ENCODE measurements at regions of chr3 and their contacts with region 1.

Region 1: DNA sequence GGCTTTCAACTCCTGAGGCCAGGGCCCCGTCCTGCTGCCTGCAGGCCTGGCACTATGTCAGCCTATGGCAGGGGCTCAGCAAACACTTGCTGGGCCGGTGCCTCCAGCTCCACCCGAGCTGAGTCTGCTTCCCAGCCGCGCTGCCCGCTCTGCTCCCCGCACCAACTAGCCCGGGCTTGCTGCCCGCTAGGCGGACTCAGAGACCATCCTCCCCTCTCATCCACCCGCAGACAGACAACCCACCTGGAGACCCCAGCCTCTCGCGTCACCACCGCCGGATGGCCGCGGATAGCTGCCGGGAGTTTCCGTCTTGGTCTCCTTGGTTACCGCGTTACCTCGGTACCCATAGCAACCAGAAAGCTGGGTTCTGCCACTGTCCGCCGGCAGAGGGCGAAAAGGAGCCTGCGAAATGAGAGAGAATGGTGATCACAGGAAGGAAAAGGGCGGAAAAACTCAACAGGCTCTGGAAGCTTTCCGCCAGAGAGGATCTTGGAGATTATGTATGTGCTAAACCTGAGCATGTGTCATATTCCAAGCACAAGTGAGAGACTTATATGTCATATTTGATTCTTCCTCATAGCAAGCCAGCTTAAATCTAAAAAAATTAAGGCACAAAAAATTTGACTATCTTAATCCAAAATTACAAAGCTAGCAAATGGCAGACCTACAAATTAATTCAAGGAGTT is at the start of gene ZBBX:
- DNase-seq: peak; percentile 92 to 99
- H3K4me3 ChIP-seq: peak within 1 kb of the TSS; percentile 40 to 58 (median 44)
- H3K27ac ChIP-seq: no peak within 1 kb of the TSS
- H3K4me1 ChIP-seq: no peaks in the 10 kb centered on the region
- H3K27me3 ChIP-seq: no peaks in the 10 kb centered on the region
- CTCF ChIP-seq: peak; percentile 71 to 95 (median 79)
- EP300 ChIP-seq: 0 out of 3 replicates have a peak, but pooled peaks of 1 of the 2 experiments have one; percentile 41
- POLR2A ChIP-seq: peak in 1 of 2 experiments; percentile 33; a peak in 1 of 3 replicates
- RAD21 ChIP-seq: peak; percentile 70 to 77
- total RNA-seq, gene ZBBX: 0.84 and 1.0 TPM in 2 replicates

Region 2: GRCh38 chr3:167102071-167102470 is 278.1 kb before region 1 on chr3:
- CTCF ChIA-PET with region 1: no interaction called
- POLR2A ChIA-PET with region 1: no interaction called
- DNase-seq: peak in 1 of 2 experiments; percentile 54
- H3K4me3 ChIP-seq: no peak overlapping the region
- H3K27ac ChIP-seq: no peak overlapping the region
- H3K4me1 ChIP-seq: no peaks in the 10 kb centered on the region
- H3K27me3 ChIP-seq: no peaks in the 10 kb centered on the region
- CTCF ChIP-seq: peak in 2 of 3 experiments; percentile 71 to 73; a peak in 3 of 4 replicates
- EP300 ChIP-seq: no peak
- POLR2A ChIP-seq: no peak
- RAD21 ChIP-seq: peak; percentile 87 to 88

Region 3: DNA sequence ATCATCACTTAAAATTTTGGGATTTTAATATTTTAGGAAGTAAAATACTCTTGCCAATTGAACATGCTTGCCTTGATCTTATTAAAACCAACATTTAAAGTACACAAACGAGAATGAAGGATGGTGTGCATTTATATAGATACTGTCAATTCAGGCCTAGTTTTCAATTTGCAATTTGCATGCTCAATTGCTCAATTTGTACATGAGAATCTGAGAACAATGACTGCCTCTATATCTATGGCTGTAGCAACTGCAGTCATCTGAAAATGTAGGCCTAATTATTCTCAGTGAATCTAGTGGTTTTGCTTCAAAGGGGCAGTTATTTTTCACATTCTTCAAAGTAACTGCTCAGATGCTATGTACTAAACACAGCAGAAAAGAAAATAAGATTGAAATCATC is 18.8 kb before region 1 on chr3:
- CTCF ChIA-PET with region 1: interaction called, 17 read pairs
- POLR2A ChIA-PET with region 1: no interaction called
- DNase-seq: no peak
- H3K4me3 ChIP-seq: no peak overlapping the region
- H3K27ac ChIP-seq: no peak overlapping the region
- H3K4me1 ChIP-seq: no peaks in the 10 kb centered on the region
- H3K27me3 ChIP-seq: no peaks in the 10 kb centered on the region
- CTCF ChIP-seq: no peak
- EP300 ChIP-seq: no peak
- POLR2A ChIP-seq: no peak
- RAD21 ChIP-seq: no peak

Region 4: GRCh38 chr3:167394003-167394402 is 13.9 kb after region 1 on chr3:
- CTCF ChIA-PET with region 1: interaction called, 15 read pairs
- POLR2A ChIA-PET with region 1: no interaction called
- DNase-seq: no peak
- H3K4me3 ChIP-seq: no peak overlapping the region
- H3K27ac ChIP-seq: no peak overlapping the region
- H3K4me1 ChIP-seq: peaks cover 1 to 5% (median 4%) of the 10 kb centered on the region in 4 experiments; a peak in 5 of 7 replicates
- H3K27me3 ChIP-seq: no peaks in the 10 kb centered on the region
- CTCF ChIP-seq: no peak; a peak in 1 of 4 replicates
- EP300 ChIP-seq: no peak
- POLR2A ChIP-seq: no peak
- RAD21 ChIP-seq: peak; percentile 27 to 45

Region 5: GRCh38 chr3:167406875-167407492 is 26.8 kb after region 1 on chr3:
- CTCF ChIA-PET with region 1: interaction called, 13 read pairs
- POLR2A ChIA-PET with region 1: no interaction called
- DNase-seq: peak in 1 of 2 experiments; percentile 31
- H3K4me3 ChIP-seq: no peak overlapping the region
- H3K27ac ChIP-seq: no peak overlapping the region
- H3K4me1 ChIP-seq: no peaks in the 10 kb centered on the region; a peak in 1 of 7 replicates
- H3K27me3 ChIP-seq: no peaks in the 10 kb centered on the region
- CTCF ChIP-seq: peak; percentile 24 to 87 (median 84)
- EP300 ChIP-seq: no peak
- POLR2A ChIP-seq: no peak
- RAD21 ChIP-seq: peak; percentile 91 to 94

Region 6: DNA sequence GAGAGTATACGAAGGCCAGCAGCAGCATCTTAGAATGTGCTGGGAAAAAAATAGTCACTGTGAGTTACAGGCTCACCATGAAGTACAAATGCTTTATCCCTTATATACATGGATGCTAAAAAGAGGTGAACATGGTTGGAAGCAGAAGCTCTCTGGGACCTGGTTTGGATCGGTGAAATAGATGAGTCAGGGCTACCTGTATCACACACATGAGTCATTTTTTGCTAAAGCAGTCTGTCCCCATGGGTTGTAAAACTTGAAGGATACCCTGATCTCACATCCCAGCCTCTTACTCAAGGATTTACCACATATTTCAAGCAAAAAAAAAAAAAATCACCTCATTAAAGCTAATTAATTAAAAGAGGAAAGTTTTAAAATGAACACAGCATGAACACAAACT is 100.6 kb after region 1 on chr3:
- CTCF ChIA-PET with region 1: no interaction called
- POLR2A ChIA-PET with region 1: no interaction called
- DNase-seq: no peak
- H3K4me3 ChIP-seq: no peak overlapping the region
- H3K27ac ChIP-seq: no peak overlapping the region
- H3K4me1 ChIP-seq: no peaks in the 10 kb centered on the region
- H3K27me3 ChIP-seq: no peaks in the 10 kb centered on the region
- CTCF ChIP-seq: no peak
- EP300 ChIP-seq: no peak
- POLR2A ChIP-seq: no peak
- RAD21 ChIP-seq: no peak

Measured in H1 (cell line).